CD8-positive, alpha-beta T cell (primary cell): ENCODE measurements at regions of chr1 and their contacts with region 1.

Region 1: GRCh38 chr1:179002552-179003345 is 22.9 kb upstream of the FAM20B start:
- DNase-seq: peak; percentile 40 to 83 (median 71)
- ATAC-seq: peak; percentile 76
- H3K4me3 ChIP-seq: no peak overlapping the region
- H3K4me3 Mint-ChIP-seq: no peak overlapping the region
- H3K27ac ChIP-seq: no peak overlapping the region
- H3K27ac Mint-ChIP-seq: no peak overlapping the region
- H3K4me1 ChIP-seq: peaks cover 24% of the 10 kb centered on the region
- H3K4me1 Mint-ChIP-seq: peaks cover 20% of the 10 kb centered on the region
- H3K27me3 ChIP-seq: no peaks in the 10 kb centered on the region
- H3K27me3 Mint-ChIP-seq: no peaks in the 10 kb centered on the region
- CTCF ChIP-seq: peak; percentile 91

Region 2: GRCh38 chr1:178532392-178532791 is 470.4 kb before region 1 on chr1:
- CTCF ChIA-PET with region 1: interaction called, 74 read pairs
- POLR2A ChIA-PET with region 1: interaction called, 3 read pairs
- intact Hi-C with region 1: loop called (anchors 1 kb)
- DNase-seq: peak; percentile 48 to 86 (median 72)
- ATAC-seq: peak; percentile 73
- H3K4me3 ChIP-seq: no peak overlapping the region
- H3K4me3 Mint-ChIP-seq: no peak overlapping the region
- H3K27ac ChIP-seq: no peak overlapping the region
- H3K27ac Mint-ChIP-seq: no peak overlapping the region
- H3K4me1 ChIP-seq: peaks cover 6% of the 10 kb centered on the region
- H3K4me1 Mint-ChIP-seq: peaks cover 4% of the 10 kb centered on the region
- H3K27me3 ChIP-seq: no peaks in the 10 kb centered on the region
- H3K27me3 Mint-ChIP-seq: peaks cover 2% of the 10 kb centered on the region
- CTCF ChIP-seq: peak; percentile 92

Region 3: DNA sequence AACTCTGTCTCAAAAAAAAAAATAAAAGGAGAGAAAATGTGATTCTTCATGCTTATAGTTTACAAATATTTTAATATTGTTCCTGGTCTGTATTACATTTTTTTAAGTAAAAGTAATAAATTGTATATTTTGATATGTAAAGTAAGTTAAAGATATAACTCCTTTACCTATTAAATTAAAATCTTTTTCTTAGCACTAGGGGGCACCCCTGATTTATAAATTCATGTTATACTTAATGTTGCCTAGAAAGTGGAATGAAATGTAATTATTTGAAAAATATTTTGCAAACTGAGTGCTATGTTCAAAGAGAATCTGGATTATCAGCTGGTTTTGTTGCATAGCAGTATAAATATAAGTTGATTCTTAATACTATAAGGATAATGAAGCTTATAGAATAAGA is 228.5 kb before region 1 on chr1:
- CTCF ChIA-PET with region 1: interaction called, 24 read pairs
- POLR2A ChIA-PET with region 1: interaction called, 4 read pairs
- intact Hi-C with region 1: loop called (anchors 1 to 2 kb)
- DNase-seq: peak in 2 of 9 experiments; percentile 19 to 38
- ATAC-seq: no peak
- H3K4me3 ChIP-seq: no peak overlapping the region
- H3K4me3 Mint-ChIP-seq: no peak overlapping the region
- H3K27ac ChIP-seq: no peak overlapping the region
- H3K27ac Mint-ChIP-seq: no peak overlapping the region
- H3K4me1 ChIP-seq: no peaks in the 10 kb centered on the region
- H3K4me1 Mint-ChIP-seq: no peaks in the 10 kb centered on the region
- H3K27me3 ChIP-seq: no peaks in the 10 kb centered on the region
- H3K27me3 Mint-ChIP-seq: no peaks in the 10 kb centered on the region
- CTCF ChIP-seq: peak; percentile 56

Region 4: GRCh38 chr1:179043266-179043665 is 40.5 kb after region 1 on chr1:
- CTCF ChIA-PET with region 1: interaction called, 12 read pairs
- POLR2A ChIA-PET with region 1: no interaction called
- intact Hi-C with region 1: no loop called
- DNase-seq: no peak
- ATAC-seq: no peak
- H3K4me3 ChIP-seq: no peak overlapping the region
- H3K4me3 Mint-ChIP-seq: no peak overlapping the region
- H3K27ac ChIP-seq: no peak overlapping the region
- H3K27ac Mint-ChIP-seq: no peak overlapping the region
- H3K4me1 ChIP-seq: peaks cover 9% of the 10 kb centered on the region
- H3K4me1 Mint-ChIP-seq: peaks cover 16% of the 10 kb centered on the region
- H3K27me3 ChIP-seq: no peaks in the 10 kb centered on the region
- H3K27me3 Mint-ChIP-seq: no peaks in the 10 kb centered on the region
- CTCF ChIP-seq: no peak

Region 5: DNA sequence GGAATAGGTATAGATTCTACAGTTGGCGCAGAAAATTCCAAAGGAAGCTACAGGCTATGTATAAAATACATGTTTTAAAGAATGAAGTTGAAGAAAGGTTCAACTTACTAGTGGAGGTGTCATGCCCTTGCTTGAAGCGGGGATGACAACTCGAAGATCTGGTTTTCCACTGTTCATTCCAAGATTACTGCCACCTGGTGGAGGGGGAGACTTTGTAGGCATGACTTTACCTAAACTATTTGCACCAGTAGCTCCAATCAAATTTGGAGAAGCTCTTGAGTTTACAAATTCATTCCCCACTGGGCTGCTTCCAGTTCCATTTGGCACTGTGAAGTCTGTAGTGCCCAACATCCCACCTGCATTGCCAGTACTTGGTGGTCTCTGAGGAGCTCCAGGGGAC is 444.7 kb after region 1 on chr1:
- CTCF ChIA-PET with region 1: no interaction called
- POLR2A ChIA-PET with region 1: no interaction called
- intact Hi-C with region 1: no loop called
- DNase-seq: peak in 1 of 9 experiments; percentile 8
- ATAC-seq: no peak
- H3K4me3 ChIP-seq: no peak overlapping the region
- H3K4me3 Mint-ChIP-seq: no peak overlapping the region
- H3K27ac ChIP-seq: no peak overlapping the region
- H3K27ac Mint-ChIP-seq: no peak overlapping the region
- H3K4me1 ChIP-seq: no peaks in the 10 kb centered on the region
- H3K4me1 Mint-ChIP-seq: no peaks in the 10 kb centered on the region
- H3K27me3 ChIP-seq: no peaks in the 10 kb centered on the region
- H3K27me3 Mint-ChIP-seq: peaks cover 13% of the 10 kb centered on the region
- CTCF ChIP-seq: no peak